GM12878 (cell line): ENCODE measurements at regions of chr1 and their contacts with region 1.

Region 1: GRCh38 chr1:207963427-207964194 is 52.7 kb upstream of the CD34 start:
- DNase-seq: peak; percentile 38
- ATAC-seq: peak; percentile 96
- H3K4me3 ChIP-seq: peak overlapping the region; percentile 58
- H3K27ac ChIP-seq: peak overlapping the region; percentile 58
- H3K4me1 ChIP-seq: peaks cover 4% of the 10 kb centered on the region; the same call in 1 of the 2 replicates
- H3K27me3 ChIP-seq: peaks cover 5 to 14% of the 10 kb centered on the region in 2 experiments
- CTCF ChIP-seq: peak; percentile 88 to 100 (median 94); a peak in 5 of 6 replicates
- EP300 ChIP-seq: no peak
- POLR2A ChIP-seq: peak; percentile 94
- RAD21 ChIP-seq: peak; percentile 89

Region 2: DNA sequence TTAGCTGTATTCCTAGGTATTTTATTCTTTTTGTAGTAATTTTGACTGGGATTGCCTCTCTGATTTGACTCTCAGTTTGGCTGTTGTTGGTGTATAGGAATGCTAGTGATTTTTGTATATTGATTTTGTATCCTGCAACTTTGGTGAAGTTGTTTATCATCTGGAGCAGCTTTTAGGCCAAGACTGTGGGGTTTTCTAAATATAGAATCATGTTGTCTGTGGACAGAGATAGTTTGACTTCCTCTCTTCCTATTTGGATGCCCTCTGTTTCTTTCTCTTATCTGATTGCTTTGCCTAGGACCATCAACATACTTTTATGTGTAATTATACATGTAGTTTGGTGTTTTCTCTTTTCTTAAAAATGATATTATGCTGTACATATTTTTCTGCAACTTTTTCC is 184.6 kb before region 1 on chr1:
- CTCF ChIA-PET with region 1: no interaction called
- POLR2A ChIA-PET with region 1: no interaction called
- RAD21 ChIA-PET with region 1: no interaction called
- SMC1A ChIA-PET with region 1: no interaction called
- in situ Hi-C with region 1: no loop called
- intact Hi-C with region 1: no loop called
- DNase-seq: no peak
- ATAC-seq: no peak
- H3K4me3 ChIP-seq: no peak overlapping the region
- H3K27ac ChIP-seq: no peak overlapping the region
- H3K4me1 ChIP-seq: no peaks in the 10 kb centered on the region
- H3K27me3 ChIP-seq: no peaks in the 10 kb centered on the region
- CTCF ChIP-seq: no peak
- EP300 ChIP-seq: no peak
- POLR2A ChIP-seq: no peak
- RAD21 ChIP-seq: no peak

Region 3: DNA sequence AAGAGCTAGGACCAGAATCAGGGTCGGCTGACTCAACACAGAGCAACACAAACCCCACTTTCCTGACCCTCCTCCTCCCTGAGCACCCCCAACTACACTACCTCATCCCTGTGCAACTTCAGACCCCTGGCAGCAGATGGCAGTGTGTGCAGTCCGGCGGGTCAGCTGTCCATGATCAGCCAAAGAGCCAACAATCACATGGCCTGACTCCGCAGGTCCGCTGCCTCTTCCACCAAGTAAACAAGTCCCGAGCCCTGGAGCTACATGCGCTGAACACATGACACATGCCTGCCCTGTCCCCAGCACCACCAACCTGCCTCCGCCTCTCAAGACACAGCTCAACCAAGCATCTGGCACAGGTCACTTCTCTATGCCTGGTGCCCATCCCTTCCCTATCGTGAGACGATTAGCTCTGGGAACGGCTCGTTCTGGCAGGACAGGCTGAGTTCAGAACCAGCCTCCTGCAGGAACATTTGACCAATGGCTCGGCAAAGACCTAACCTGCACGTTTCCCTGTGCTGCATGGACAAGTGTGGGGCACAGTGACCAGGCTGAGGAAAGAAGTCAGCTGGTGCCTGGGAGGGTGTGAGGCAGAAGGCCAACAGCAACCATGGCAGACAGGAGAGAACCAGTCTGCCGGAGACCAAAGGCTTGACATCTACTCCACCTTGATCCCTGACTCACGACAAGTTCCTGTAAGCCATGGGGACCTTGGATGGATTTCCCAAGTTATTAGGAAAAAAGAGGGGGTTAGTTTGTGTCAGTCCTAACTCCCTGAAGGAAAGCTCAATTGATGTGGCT is 151.5 kb before region 1 on chr1:
- CTCF ChIA-PET with region 1: interaction called, 10 read pairs
- POLR2A ChIA-PET with region 1: no interaction called
- RAD21 ChIA-PET with region 1: interaction called, 5 read pairs
- SMC1A ChIA-PET with region 1: interaction called, 4 read pairs
- in situ Hi-C with region 1: no loop called
- intact Hi-C with region 1: no loop called
- DNase-seq: no peak
- ATAC-seq: peak; percentile 53
- H3K4me3 ChIP-seq: no peak overlapping the region
- H3K27ac ChIP-seq: no peak overlapping the region
- H3K4me1 ChIP-seq: peaks cover 26% of the 10 kb centered on the region
- H3K27me3 ChIP-seq: no peaks in the 10 kb centered on the region
- CTCF ChIP-seq: peak; percentile 50 to 60 (median 56)
- EP300 ChIP-seq: no peak
- POLR2A ChIP-seq: peak; percentile 37; the same call in 1 of the 2 replicates
- RAD21 ChIP-seq: peak; percentile 55

Region 4: DNA sequence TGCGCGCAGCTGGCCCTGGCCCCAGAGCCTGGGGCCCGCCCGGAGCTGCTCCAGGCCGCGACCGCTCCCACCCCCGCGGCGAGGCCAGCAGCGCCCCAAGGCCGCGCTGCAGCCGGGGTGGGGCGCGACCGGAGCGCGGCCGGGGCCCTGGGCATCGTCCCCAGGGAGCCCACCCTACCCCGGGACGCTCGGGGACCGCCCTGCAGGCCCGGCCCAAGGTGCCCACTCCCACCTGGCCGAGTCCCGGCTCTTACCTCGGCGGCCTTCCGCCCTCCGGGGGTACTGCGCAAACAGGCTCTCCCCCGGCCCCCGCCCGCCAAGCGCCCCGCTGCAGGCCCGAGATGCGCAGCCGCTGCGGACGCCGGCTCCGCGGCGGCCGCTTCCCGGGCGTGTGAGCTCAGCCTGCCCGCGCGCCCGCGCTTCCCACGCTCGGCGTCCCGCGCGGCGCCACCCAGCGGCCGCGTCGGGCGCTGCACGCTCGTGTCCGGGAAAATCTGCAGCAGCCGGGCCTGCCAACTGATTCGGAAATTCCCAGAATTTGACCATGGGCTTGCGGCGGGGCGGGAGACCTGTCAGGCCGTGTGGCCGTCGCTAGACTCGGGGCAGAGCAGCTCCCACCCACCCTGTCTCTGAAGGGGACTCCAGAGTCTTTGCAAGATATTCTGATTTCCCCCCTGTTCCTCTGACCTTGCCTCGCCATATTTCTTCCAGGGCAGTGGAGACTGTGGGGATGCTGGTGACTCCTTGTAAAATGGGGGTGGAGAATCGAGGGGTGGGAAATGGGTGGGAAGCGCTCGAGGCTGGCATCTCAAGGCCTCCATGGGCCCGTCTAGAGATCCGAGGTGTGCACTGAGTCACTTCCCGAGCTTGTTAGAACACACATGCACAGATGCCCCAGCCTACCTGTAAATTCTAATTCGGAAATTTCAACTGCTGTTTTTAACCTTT is 94.6 kb before region 1 on chr1:
- CTCF ChIA-PET with region 1: interaction called, 24 read pairs
- POLR2A ChIA-PET with region 1: no interaction called
- RAD21 ChIA-PET with region 1: interaction called, 10 read pairs
- SMC1A ChIA-PET with region 1: interaction called, 11 read pairs
- in situ Hi-C with region 1: no loop called
- intact Hi-C with region 1: no loop called
- DNase-seq: no peak
- ATAC-seq: peak; percentile 82
- H3K4me3 ChIP-seq: peak overlapping the region; percentile 97
- H3K27ac ChIP-seq: peak overlapping the region; percentile 77
- H3K4me1 ChIP-seq: peaks cover 55% of the 10 kb centered on the region
- H3K27me3 ChIP-seq: no peaks in the 10 kb centered on the region
- CTCF ChIP-seq: peak; percentile 70 to 83 (median 81)
- EP300 ChIP-seq: no peak; a peak in 1 of 4 replicates
- POLR2A ChIP-seq: peak; percentile 64; the same call in 1 of the 2 replicates
- RAD21 ChIP-seq: peak; percentile 62

Region 5: DNA sequence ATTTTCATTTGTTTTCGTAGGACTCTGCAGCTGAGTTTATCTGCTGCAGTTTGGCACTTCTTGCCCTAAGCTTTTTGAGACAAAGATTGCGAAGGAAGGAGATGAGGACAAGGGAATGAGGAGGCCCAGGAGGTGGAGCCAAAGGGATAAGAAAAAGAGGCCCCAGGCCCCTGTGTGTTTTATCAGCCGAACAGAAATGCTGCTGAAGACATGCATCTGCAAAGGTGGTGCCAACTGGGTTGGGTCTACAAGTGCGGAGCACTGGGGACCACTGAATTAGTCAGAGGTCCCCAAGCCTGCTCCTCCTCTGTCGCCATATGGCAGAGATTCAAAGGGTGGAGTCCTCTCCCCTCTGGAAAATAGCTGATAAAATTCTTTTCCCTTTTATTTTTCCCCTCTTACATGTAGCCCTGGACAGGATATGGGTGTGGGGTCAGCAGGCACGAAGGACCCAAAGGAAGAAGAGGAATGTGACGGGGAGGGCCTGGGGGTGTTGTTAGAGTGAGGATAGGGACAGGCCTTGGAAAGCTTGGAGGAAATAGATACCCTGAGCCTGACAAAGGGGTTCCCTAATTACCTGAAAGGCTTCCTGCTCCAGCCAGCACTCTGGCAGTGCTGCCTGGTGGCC is 55.4 kb before region 1 on chr1:
- CTCF ChIA-PET with region 1: interaction called, 13 read pairs
- POLR2A ChIA-PET with region 1: no interaction called
- RAD21 ChIA-PET with region 1: interaction called, 8 read pairs
- SMC1A ChIA-PET with region 1: interaction called, 9 read pairs
- in situ Hi-C with region 1: no loop called
- intact Hi-C with region 1: no loop called
- DNase-seq: no peak
- ATAC-seq: no peak; the same call in 2 of the 3 replicates
- H3K4me3 ChIP-seq: no peak overlapping the region
- H3K27ac ChIP-seq: no peak overlapping the region
- H3K4me1 ChIP-seq: no peaks in the 10 kb centered on the region
- H3K27me3 ChIP-seq: peaks cover 22 to 23% of the 10 kb centered on the region in 2 experiments
- CTCF ChIP-seq: 0 out of 6 replicates have a peak, but pooled peaks of 1 of the 3 experiments have one; percentile 9
- EP300 ChIP-seq: no peak
- POLR2A ChIP-seq: no peak
- RAD21 ChIP-seq: no peak

Region 6: DNA sequence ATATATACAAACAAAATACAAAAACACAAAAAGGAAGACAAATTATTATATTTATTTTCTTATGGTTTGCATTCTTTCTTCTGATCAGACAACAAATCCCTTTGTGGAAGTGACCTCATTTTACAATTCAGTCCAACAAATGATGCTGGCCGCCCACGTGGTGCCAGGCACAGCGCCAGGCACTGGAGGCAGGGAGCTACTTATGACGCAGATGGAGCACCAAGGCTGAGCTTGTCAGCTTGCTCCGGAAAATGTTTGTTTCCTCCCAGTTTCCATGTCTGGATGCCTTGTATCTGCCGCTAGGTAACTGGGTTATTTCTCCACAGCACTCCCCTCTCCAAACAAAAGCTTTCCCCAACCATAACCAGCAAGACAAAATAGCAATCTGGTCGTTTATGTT is 21.9 kb before region 1 on chr1:
- CTCF ChIA-PET with region 1: interaction called, 27 read pairs
- POLR2A ChIA-PET with region 1: interaction called, 3 read pairs
- RAD21 ChIA-PET with region 1: interaction called, 7 read pairs
- SMC1A ChIA-PET with region 1: interaction called, 10 read pairs
- in situ Hi-C with region 1: no loop called
- intact Hi-C with region 1: no loop called
- DNase-seq: no peak
- ATAC-seq: no peak
- H3K4me3 ChIP-seq: no peak overlapping the region
- H3K27ac ChIP-seq: no peak overlapping the region
- H3K4me1 ChIP-seq: no peaks in the 10 kb centered on the region
- H3K27me3 ChIP-seq: no peaks in the 10 kb centered on the region
- CTCF ChIP-seq: no peak
- EP300 ChIP-seq: no peak
- POLR2A ChIP-seq: no peak
- RAD21 ChIP-seq: no peak

Region 7: DNA sequence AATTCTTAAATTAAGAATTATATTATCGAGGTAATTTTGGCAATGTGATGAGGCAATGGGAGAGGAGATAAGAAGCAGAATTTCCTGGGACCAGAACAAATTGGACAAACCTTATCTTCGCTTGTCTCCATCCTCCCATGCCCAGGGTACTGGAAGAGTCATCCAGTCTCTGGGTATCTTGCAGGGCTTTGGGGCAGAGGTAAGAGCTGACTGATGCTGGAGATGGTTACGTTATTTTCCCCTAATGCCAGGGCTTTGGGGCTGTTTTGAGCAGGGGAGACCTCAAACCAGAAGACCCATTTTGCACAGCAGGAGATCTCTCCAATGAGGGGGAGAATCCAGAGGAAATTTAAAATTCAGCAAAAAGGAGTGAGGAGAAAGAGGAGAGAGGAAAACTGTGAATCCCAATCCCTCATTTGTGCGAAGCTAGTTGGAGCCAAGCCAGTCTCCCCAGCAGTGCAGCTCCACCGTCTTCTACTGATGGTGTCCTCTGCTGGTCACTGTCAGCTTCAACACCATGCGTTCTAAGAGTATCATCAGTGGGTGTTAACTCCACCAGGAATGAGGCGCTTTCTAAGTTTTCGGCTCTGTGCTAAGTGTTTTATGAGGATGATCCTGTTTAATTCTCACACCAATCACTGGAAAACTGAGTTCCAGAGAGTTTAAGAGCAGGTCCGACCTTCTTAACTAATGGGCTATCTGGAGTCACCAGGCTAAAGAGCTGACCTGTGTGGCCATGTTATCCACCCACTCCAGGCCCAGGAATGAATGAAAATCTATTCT is 34.1 kb after region 1 on chr1:
- CTCF ChIA-PET with region 1: interaction called, 8 read pairs
- POLR2A ChIA-PET with region 1: no interaction called
- RAD21 ChIA-PET with region 1: interaction called, 11 read pairs
- SMC1A ChIA-PET with region 1: interaction called, 3 read pairs
- in situ Hi-C with region 1: no loop called
- intact Hi-C with region 1: no loop called
- DNase-seq: no peak
- ATAC-seq: peak; percentile 99
- H3K4me3 ChIP-seq: no peak overlapping the region
- H3K27ac ChIP-seq: no peak overlapping the region
- H3K4me1 ChIP-seq: no peaks in the 10 kb centered on the region
- H3K27me3 ChIP-seq: peaks cover 2 to 3% of the 10 kb centered on the region in 2 experiments; a peak in 2 of 4 replicates
- CTCF ChIP-seq: peak; percentile 63 to 89 (median 82)
- EP300 ChIP-seq: no peak
- POLR2A ChIP-seq: no peak
- RAD21 ChIP-seq: peak; percentile 26

Region 8: DNA sequence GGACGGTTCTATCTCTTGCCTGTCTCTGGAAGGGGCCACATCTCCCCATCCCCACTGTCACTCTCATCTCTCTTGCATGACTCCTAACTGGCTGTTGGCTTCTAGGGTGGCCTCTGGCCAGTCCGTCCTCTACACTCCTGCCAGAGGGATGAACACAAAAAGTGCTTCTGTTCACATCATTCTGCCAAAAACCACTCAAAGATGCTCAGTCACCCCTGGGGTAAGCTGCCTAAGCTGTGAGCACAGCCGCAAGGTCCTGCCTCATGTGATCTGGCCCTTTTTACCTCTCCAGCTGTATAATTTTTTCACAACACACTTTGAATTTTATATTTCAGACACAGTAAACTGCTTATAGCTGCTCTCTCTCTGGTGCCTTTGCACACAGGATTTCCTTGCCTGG is 44.9 kb after region 1 on chr1:
- CTCF ChIA-PET with region 1: no interaction called
- POLR2A ChIA-PET with region 1: no interaction called
- RAD21 ChIA-PET with region 1: no interaction called
- SMC1A ChIA-PET with region 1: no interaction called
- in situ Hi-C with region 1: no loop called
- intact Hi-C with region 1: no loop called
- DNase-seq: no peak
- ATAC-seq: no peak
- H3K4me3 ChIP-seq: no peak overlapping the region
- H3K27ac ChIP-seq: no peak overlapping the region
- H3K4me1 ChIP-seq: no peaks in the 10 kb centered on the region
- H3K27me3 ChIP-seq: peaks cover 0 to 2% of the 10 kb centered on the region in 2 experiments; a peak in 3 of 4 replicates
- CTCF ChIP-seq: no peak
- EP300 ChIP-seq: no peak
- POLR2A ChIP-seq: no peak
- RAD21 ChIP-seq: no peak

Region 9: DNA sequence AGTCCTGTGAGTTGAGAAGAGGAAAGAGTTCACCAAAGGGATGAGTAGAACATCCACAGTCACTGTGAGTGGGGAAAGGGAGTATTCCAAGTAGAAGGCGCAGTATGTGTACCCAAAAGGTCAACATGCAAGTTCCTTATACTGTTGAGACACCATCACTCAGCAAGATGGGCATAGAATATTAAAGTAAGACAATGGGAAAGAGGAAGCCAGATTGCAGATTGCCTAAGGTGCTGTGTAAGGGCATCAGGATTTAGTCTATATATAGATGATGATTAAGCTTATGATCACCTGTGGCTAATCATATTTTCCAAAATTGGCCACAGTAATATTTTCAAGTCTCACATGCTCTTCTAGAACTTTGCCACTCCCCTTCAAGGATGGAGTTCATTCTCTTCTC is 1499.8 kb after region 1 on chr1:
- CTCF ChIA-PET with region 1: no interaction called
- POLR2A ChIA-PET with region 1: no interaction called
- RAD21 ChIA-PET with region 1: no interaction called
- SMC1A ChIA-PET with region 1: no interaction called
- in situ Hi-C with region 1: no loop called
- intact Hi-C with region 1: no loop called
- DNase-seq: no peak
- ATAC-seq: no peak
- H3K4me3 ChIP-seq: no peak overlapping the region
- H3K27ac ChIP-seq: no peak overlapping the region
- H3K4me1 ChIP-seq: no peaks in the 10 kb centered on the region
- H3K27me3 ChIP-seq: 0 out of 4 replicates have a peak, but pooled peaks cover 0 to 3% of the 10 kb centered on the region in 2 experiments
- CTCF ChIP-seq: no peak
- EP300 ChIP-seq: no peak
- POLR2A ChIP-seq: no peak
- RAD21 ChIP-seq: no peak